ENCODE measurements at regions of chr15 and their contacts with region 1.

Region 1: DNA sequence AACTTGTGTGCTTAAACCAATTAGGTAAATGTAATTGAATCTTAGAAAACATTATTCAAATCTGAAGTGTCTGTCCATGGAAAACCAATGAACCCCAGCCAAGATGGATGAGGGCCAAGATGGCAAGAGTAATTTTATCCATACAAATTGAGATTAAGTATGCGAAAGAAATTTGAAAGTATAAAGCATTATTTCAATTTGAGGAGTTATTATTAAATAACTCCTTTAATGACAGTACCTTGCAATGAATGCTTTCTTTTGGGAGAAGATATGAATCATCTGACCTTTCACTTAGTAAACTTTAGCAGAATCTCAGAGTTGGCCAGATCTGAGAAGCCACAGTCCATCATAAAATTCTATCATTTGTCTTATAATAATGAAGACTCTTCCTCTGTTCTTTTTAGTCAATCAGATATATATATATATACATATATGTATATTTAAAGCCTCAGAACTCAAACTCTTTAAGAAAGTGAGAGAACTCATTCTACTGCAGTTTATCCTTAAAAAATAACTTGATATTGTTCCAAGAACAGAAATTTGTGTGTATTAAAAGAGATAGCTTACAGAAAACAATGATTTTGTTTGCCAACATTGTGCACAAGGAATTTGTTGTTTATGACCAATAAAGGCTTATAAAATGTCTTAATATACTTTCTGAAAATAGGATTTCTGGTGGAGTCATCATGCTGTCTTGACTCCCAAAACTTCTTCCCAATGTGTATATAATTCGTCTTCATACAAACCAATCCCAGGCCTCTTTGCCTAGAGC is 434.8 kb upstream of the THBS1 start:
- DNase-seq: no peak
- H3K4me3 Mint-ChIP-seq: no peak overlapping the region
- H3K27ac Mint-ChIP-seq: no peak overlapping the region
- H3K4me1 Mint-ChIP-seq: peaks cover 46% of the 10 kb centered on the region
- H3K27me3 Mint-ChIP-seq: peaks cover 5% of the 10 kb centered on the region

Region 2: DNA sequence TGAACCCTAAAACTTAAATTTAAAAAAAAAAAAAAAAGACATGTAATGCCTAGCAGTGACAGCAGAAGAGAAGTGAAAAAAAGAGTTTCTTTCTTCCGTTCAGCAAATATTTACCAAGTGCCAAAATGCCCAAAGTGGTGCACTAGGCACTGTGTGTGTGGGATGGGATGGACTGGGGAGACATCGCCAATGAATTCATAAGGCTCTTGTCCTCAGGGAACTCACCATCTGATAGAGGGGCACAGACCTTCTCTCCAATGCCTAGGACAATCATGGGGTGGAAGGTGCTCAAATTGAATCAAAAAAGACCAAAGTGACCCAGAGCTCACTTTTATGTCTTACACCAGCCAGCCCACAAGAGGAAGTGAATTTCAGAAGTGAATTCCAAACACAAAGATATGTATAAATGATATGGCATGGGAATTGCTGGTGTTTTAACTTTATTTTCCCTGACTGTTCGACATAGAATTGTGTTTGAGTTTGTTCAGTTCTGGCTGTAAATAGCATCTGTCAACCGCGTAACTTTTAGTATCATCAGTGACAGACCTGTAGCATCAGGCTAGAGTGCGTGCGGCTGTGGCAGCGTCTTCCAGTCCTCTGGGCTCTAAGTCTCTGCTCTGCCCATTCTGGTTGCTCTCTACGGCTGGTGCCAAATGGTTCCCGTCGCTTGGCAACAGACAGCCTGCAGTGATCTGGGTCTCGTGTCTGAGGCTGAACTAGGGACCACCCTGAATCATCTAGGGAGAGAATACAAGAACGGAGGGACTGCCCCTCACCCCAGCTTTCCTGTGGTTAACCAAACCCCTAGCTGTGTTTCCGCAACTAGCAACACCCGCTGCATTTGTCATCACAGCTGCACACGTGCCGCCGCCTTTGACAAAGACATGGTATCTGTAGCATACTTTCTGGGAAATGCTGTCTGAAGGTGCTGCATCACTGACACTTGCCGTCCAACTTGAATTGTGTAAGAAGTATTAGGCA is 280.8 kb after region 1 on chr15:
- intact Hi-C with region 1: loop called (anchors 2 kb)
- DNase-seq: peak; percentile 63
- H3K4me3 Mint-ChIP-seq: peak overlapping the region; percentile 19
- H3K27ac Mint-ChIP-seq: peak overlapping the region; percentile 55
- H3K4me1 Mint-ChIP-seq: peaks cover 19% of the 10 kb centered on the region
- H3K27me3 Mint-ChIP-seq: peaks cover 24% of the 10 kb centered on the region

Measured in activated T-helper 1 cell treated with anti-CD3 and anti-CD28 coated beads, Interleukin-12 subunit alpha, Interleukin-12 subunit beta, Interleukin-2, Interleukin-4 antibody, amounts not matched to agents 30 ng/mL and 10 ng/mL and 1 ng/mL, durations not matched to agents 14 hours and 24 hours and 36 hours (primary cell).